CD14-positive monocyte (primary cell): ENCODE measurements at regions of chr15 and their contacts with region 1.

Region 1: GRCh38 chr15:65818927-65819562 is 27.0 kb upstream of the DENND4A start:
- DNase-seq: peak; percentile 87 to 96 (median 93)
- H3K4me3 ChIP-seq: peak overlapping the region in 1 of 3 experiments; percentile 26
- H3K4me3 Mint-ChIP-seq: peak overlapping the region in 1 of 2 donors; percentile 70
- H3K27ac ChIP-seq: peak overlapping the region; percentile 42 to 92
- H3K27ac Mint-ChIP-seq: peak overlapping the region; percentile 93 to 97 (median 95)
- H3K4me1 ChIP-seq: peaks cover 16 to 26% of the 10 kb centered on the region in 2 donors
- H3K4me1 Mint-ChIP-seq: peaks cover 32% of the 10 kb centered on the region
- H3K27me3 ChIP-seq: no peaks in the 10 kb centered on the region
- H3K27me3 Mint-ChIP-seq: peaks cover 0 to 4% (median 0%) of the 10 kb centered on the region in 3 donors
- CTCF ChIP-seq: no peak

Region 2: DNA sequence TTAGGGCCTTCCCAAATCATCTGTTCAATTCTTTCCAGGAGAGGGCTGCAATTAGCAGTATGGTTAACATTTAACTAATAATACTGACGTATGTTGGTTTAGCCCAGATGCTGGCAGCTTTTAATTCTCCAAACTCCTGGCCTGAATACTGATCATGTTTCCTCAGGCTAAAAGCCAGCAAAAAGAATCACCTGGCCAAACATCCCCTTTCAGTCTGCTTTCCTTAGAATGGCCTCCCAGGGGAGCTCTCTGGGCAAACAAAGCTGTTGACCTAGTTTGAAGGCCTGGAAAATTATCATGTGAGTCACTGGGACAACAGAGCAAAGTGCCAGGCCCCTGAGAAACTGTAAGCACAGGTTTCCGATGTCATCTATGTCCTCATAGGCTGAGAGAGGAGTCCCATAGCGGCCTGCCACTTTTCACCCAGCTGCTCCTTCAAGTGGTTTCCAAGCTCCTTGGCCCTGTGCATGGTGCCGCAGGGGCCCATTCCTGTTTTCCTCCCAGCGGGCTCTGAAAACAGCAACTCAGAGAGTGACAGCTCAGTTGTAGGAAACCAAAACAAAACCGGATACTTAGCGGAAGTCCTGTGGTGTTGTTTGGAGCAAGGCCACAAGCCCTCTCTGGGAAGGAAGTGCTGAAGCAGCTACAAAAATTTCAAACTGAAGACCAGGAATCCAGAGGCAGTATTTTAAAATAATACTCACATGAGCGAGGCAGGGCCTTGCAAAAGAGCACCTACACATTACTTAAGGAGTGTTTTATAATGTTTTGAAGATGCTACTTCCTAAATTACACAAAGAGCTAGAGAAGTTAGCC is 13.7 kb after region 1 on chr15:
- intact Hi-C with region 1: loop called in 1 of 2 experiments (anchors 2 kb)
- DNase-seq: peak; percentile 70 to 84 (median 83)
- H3K4me3 ChIP-seq: peak overlapping the region in 2 of 3 experiments; percentile 7 to 51
- H3K4me3 Mint-ChIP-seq: peak overlapping the region; percentile 61 to 86
- H3K27ac ChIP-seq: peak overlapping the region; percentile 91 to 95
- H3K27ac Mint-ChIP-seq: peak overlapping the region; percentile 95 to 99 (median 97)
- H3K4me1 ChIP-seq: peaks cover 61 to 67% of the 10 kb centered on the region in 2 donors
- H3K4me1 Mint-ChIP-seq: peaks cover 76% of the 10 kb centered on the region
- H3K27me3 ChIP-seq: no peaks in the 10 kb centered on the region
- H3K27me3 Mint-ChIP-seq: peaks cover 0 to 2% (median 0%) of the 10 kb centered on the region in 3 donors
- CTCF ChIP-seq: no peak